CD8-positive, alpha-beta T cell (primary cell): ENCODE measurements at regions of chr1 and their contacts with region 1.

Region 1: DNA sequence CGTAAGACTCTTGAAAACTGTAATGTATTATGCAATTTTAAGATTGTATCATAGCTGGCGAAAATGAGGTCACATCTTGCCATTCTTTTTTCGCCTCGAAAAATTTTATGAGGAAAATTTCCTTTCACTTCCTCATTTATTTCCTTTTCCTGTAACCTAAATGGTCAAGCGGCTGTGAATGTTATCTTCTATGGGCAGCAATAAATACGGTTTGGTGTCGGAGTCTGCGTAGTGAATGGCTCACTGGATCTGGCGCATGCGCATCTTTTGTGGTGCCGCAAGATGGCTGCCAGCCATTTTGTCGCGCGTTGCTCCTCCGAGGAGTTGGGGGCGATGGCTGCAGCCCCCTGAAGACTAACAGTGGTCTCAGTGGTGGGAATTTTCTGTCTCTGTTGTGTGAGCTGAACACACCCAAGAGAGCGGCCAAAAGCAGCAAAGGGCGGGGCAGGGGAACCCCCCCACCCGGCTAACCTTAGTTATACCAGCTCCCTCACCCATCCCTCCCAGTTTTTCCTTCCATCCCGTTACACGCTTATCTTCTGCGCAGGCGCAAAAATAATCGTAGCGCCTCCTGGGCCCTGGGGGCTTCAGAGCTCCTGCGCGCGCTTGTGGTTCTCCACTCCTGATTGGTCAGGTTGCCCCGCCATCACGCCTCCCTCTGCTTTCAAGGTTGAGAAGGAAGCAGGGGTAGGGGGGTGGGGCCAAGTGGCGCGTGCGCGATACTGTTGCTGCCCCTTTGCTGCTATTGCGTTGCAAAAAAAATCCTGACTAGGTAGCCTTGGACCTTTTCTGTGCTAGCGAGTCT is at the start of gene RPRD2:
- DNase-seq: peak; percentile 97 to 100 (median 98)
- ATAC-seq: peak; percentile 95
- H3K4me3 ChIP-seq: peak within 1 kb of the TSS; percentile 69 to 90
- H3K4me3 Mint-ChIP-seq: peak within 1 kb of the TSS; percentile 99
- H3K27ac ChIP-seq: peak within 1 kb of the TSS; percentile 74 to 94
- H3K27ac Mint-ChIP-seq: peak within 1 kb of the TSS; percentile 99
- H3K4me1 ChIP-seq: peaks cover 7% of the 10 kb centered on the region
- H3K4me1 Mint-ChIP-seq: peaks cover 36% of the 10 kb centered on the region
- H3K27me3 ChIP-seq: no peaks in the 10 kb centered on the region
- H3K27me3 Mint-ChIP-seq: no peaks in the 10 kb centered on the region
- CTCF ChIP-seq: no peak
- total RNA-seq, gene RPRD2: 31.8 to 35.0 TPM

Region 2: DNA sequence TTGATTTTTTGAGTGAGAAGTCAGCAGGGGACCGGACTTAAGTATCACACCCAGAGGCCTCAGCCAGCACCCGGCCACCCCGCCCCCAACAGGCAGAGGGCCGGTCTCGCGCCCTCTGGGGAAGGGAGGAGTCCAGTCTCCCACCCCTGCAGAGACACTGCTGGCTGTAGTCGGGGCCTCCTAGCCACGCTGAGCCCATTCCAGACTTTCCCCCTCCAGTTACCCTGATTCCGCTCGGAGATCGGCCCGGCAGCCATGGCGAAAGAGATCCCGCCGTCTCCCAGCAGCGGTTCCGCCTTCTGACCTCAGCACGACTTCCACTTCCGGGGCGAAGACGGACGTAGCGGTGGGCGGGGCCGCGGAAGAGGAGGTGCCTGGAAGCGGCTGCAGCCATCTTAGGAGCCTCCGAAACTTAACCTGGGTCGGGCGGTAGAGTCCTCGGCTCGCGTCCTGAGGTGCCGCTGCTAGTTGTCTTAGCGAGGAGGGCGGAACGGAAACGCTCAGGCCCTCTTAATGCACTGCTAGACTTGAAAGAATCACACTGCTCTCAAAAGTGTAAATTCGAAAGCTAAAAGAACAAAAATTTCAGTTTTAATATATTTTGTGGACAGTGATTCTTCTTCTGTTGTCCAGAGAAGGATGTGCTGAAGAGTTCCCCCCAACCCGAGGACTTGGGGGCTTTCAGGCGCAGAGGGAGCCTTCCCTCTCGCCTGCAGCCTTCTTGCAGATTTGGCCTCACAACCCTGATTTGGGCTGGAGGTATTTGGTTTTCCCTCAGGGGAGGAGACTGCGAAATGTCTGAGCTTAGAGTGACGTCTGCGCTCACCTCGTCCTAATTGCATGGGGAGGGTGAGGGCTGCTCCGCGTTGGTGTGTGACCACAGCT is 435.9 kb before region 1 on chr1 and contains the start of gene SF3B4:
- CTCF ChIA-PET with region 1: no interaction called
- POLR2A ChIA-PET with region 1: no interaction called
- intact Hi-C with region 1: loop called in 1 of 2 experiments (anchors 5 kb)
- DNase-seq: peak; percentile 91 to 98 (median 96)
- ATAC-seq: peak; percentile 94
- H3K4me3 ChIP-seq: peak within 1 kb of the TSS; percentile 86 to 97
- H3K4me3 Mint-ChIP-seq: peak within 1 kb of the TSS; percentile 94
- H3K27ac ChIP-seq: peak within 1 kb of the TSS; percentile 71 to 95
- H3K27ac Mint-ChIP-seq: peak within 1 kb of the TSS; percentile 91
- H3K4me1 ChIP-seq: peaks cover 34% of the 10 kb centered on the region
- H3K4me1 Mint-ChIP-seq: peaks cover 45% of the 10 kb centered on the region
- H3K27me3 ChIP-seq: no peaks in the 10 kb centered on the region
- H3K27me3 Mint-ChIP-seq: peaks cover 2% of the 10 kb centered on the region
- CTCF ChIP-seq: no peak
- total RNA-seq, gene SF3B4: 52.0 to 59.1 TPM

Region 3: DNA sequence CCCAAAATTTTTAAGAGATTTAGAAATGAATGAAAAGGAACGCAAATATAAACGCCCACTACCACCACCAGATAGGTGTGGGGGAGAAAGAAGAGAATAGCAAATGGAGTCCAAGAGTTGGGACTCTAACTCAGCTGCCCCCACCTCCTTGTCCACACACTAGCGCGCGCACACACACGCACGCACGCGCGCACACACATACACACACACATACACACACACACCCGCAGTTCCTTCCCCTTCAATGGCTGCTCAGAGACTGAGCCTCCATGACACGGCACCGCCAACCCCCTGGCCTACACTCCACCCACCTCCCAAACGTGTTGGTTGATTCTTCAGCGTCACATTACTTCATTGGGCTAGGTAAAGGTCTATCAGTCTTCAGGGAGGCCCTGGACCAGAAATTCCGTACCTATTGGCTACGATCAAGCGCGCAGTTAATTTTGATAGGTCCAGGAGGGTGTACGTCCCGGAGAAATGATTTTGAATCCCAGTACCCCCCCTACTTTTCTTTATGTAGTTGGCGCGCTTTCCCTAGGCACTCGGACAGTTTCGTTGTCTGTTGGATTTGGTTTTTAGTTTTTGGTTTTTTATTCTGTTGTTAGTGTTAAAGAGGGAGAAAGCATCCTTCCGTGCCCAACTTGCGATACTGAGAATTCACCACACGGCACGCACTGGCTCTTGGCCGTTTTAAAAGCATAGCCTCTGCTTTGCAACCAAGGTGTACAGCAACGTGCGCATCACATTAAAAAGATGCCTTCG is 127.6 kb before region 1 on chr1 and contains the start of gene ANP32E:
- CTCF ChIA-PET with region 1: no interaction called
- POLR2A ChIA-PET with region 1: interaction called, 12 read pairs
- intact Hi-C with region 1: loop called (anchors 2 kb)
- DNase-seq: peak; percentile 86 to 99 (median 94)
- ATAC-seq: peak; percentile 90
- H3K4me3 ChIP-seq: peak within 1 kb of the TSS; percentile 72 to 80
- H3K4me3 Mint-ChIP-seq: no peak within 1 kb of the TSS
- H3K27ac ChIP-seq: peak within 1 kb of the TSS; percentile 89 to 96
- H3K27ac Mint-ChIP-seq: peak within 1 kb of the TSS; percentile 93
- H3K4me1 ChIP-seq: peaks cover 12% of the 10 kb centered on the region
- H3K4me1 Mint-ChIP-seq: peaks cover 18% of the 10 kb centered on the region
- H3K27me3 ChIP-seq: no peaks in the 10 kb centered on the region
- H3K27me3 Mint-ChIP-seq: no peaks in the 10 kb centered on the region
- CTCF ChIP-seq: no peak
- total RNA-seq, gene ANP32E: 30.6 to 35.0 TPM

Region 4: DNA sequence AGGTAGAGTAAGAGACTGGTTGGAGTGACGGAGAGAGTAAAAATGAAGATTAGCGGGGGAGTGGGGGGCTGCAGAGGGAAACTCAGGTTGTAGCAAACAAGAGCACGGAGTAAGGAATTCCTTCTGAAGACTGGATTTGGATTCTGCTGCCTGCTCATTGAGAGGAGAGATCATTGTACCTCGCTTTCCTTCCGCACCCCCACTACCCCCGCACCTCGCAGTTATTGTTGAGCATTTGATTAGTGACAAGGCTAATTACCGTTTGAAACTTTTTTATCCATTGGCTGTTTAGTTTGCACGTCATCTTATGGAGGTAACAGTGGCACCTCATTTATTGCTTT is 41.8 kb before region 1 on chr1:
- CTCF ChIA-PET with region 1: no interaction called
- POLR2A ChIA-PET with region 1: interaction called, 9 read pairs
- intact Hi-C with region 1: loop called (anchors 1 to 2 kb)
- DNase-seq: peak in 2 of 9 experiments; percentile 24 to 26
- ATAC-seq: peak; percentile 24
- H3K4me3 ChIP-seq: peak overlapping the region; percentile 87 to 96
- H3K4me3 Mint-ChIP-seq: peak overlapping the region; percentile 99
- H3K27ac ChIP-seq: peak overlapping the region; percentile 92 to 93
- H3K27ac Mint-ChIP-seq: peak overlapping the region; percentile 99
- H3K4me1 ChIP-seq: peaks cover 19% of the 10 kb centered on the region
- H3K4me1 Mint-ChIP-seq: peaks cover 50% of the 10 kb centered on the region
- H3K27me3 ChIP-seq: no peaks in the 10 kb centered on the region
- H3K27me3 Mint-ChIP-seq: no peaks in the 10 kb centered on the region
- CTCF ChIP-seq: no peak

Region 5: DNA sequence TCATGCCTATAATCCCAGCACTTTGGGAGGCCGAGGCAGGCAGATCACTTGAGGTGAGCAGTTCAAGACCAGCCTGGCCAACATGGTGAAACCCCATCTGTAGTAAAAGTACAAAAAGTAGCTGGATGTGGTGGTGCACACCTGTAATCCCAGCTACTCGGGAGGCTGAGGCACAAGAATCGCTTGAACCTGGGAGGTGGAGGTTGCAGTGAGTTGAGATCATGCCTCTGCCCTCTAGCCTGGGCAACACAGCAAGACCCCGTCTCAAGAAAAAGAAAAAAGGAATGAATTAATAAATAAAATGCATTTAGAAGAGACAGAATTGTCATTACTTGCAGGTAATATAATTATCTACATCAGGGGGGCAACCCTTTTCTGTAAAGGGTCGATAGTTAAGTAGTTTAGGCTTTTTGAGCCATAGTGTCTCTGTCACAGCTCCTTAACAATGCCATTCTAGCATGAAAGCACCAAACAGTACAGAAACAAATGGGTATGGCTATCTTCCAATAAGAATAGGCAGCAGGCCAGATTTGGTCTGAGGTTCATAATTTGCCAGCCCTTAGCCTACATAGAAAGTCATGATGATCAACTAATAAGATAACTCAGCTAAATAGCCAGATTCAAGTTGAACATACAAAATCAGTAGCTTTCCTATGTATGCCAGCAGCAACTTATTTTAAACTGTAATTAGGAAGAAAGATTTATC is 57.1 kb after region 1 on chr1:
- CTCF ChIA-PET with region 1: no interaction called
- POLR2A ChIA-PET with region 1: no interaction called
- intact Hi-C with region 1: no loop called
- DNase-seq: no peak
- ATAC-seq: no peak
- H3K4me3 ChIP-seq: no peak overlapping the region
- H3K4me3 Mint-ChIP-seq: no peak overlapping the region
- H3K27ac ChIP-seq: no peak overlapping the region
- H3K27ac Mint-ChIP-seq: no peak overlapping the region
- H3K4me1 ChIP-seq: no peaks in the 10 kb centered on the region
- H3K4me1 Mint-ChIP-seq: peaks cover 14% of the 10 kb centered on the region
- H3K27me3 ChIP-seq: no peaks in the 10 kb centered on the region
- H3K27me3 Mint-ChIP-seq: no peaks in the 10 kb centered on the region
- CTCF ChIP-seq: no peak

Region 6: GRCh38 chr1:150464422-150464826 is 100.8 kb after region 1 on chr1:
- CTCF ChIA-PET with region 1: no interaction called
- POLR2A ChIA-PET with region 1: no interaction called
- intact Hi-C with region 1: no loop called
- DNase-seq: peak; percentile 46 to 82 (median 73)
- ATAC-seq: peak; percentile 96
- H3K4me3 ChIP-seq: no peak overlapping the region
- H3K4me3 Mint-ChIP-seq: no peak overlapping the region
- H3K27ac ChIP-seq: no peak overlapping the region
- H3K27ac Mint-ChIP-seq: peak overlapping the region; percentile 33
- H3K4me1 ChIP-seq: no peaks in the 10 kb centered on the region
- H3K4me1 Mint-ChIP-seq: peaks cover 4% of the 10 kb centered on the region
- H3K27me3 ChIP-seq: no peaks in the 10 kb centered on the region
- H3K27me3 Mint-ChIP-seq: no peaks in the 10 kb centered on the region
- CTCF ChIP-seq: peak; percentile 78

Region 7: DNA sequence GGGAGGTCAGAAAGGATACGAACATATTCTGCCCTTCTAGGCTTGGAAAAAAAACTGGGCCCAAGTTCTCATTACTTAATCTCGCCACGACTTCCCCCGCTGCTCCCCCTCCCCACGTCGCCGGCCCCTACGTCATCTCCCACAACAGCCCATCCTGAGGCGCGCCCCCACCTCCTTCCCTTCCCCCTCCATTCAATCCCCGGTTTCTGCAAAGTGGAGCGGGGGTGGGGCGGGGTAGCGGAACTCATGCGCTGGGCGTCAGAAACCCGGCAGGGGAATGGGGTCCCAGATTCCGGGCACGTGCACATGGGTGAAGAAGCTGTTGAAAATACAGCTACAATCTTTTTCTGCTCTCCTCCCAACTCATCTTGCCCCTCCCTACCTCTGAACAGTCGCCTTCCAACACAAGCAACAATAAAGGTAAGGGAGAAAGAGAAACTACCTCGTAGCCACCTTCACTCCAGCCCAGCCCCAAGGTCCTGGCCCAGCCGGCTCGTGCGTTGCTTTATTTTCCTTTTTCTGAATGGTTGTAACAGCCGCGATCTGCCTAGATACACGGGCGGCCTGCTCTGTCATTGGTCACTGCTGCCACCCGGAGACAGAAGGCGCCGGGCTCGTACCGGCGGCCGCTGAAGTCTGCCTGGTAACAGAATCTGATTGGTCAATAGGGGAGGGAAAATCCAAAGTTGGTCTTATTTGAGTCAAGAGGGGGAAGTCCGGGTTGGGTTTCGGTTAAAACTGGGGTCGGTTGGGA is 983.3 kb after region 1 on chr1 and contains the start of gene RFX5:
- CTCF ChIA-PET with region 1: no interaction called
- POLR2A ChIA-PET with region 1: no interaction called
- intact Hi-C with region 1: loop called in 1 of 2 experiments (anchors 10 kb)
- DNase-seq: peak; percentile 85 to 99 (median 93)
- ATAC-seq: peak; percentile 92
- H3K4me3 ChIP-seq: peak within 1 kb of the TSS; percentile 75 to 83
- H3K4me3 Mint-ChIP-seq: peak within 1 kb of the TSS; percentile 95
- H3K27ac ChIP-seq: peak within 1 kb of the TSS; percentile 89 to 98
- H3K27ac Mint-ChIP-seq: peak within 1 kb of the TSS; percentile 99
- H3K4me1 ChIP-seq: peaks cover 15% of the 10 kb centered on the region
- H3K4me1 Mint-ChIP-seq: peaks cover 38% of the 10 kb centered on the region
- H3K27me3 ChIP-seq: no peaks in the 10 kb centered on the region
- H3K27me3 Mint-ChIP-seq: no peaks in the 10 kb centered on the region
- CTCF ChIP-seq: no peak
- total RNA-seq, gene RFX5: 62.6 to 65.9 TPM